Activated CD4-positive, alpha-beta T cell treated with anti-CD3 and anti-CD28 coated beads, Interleukin-2, amount 10 ng/mL, durations not matched to agents 7 days and 5 days (primary cell): ENCODE measurements at regions of chr6 and their contacts with region 1.

Region 1: GRCh38 chr6:159701411-159701999 is 8.5 kb upstream of the SOD2 start:
- DNase-seq: no peak
- H3K4me3 Mint-ChIP-seq: no peak overlapping the region
- H3K27ac Mint-ChIP-seq: no peak overlapping the region
- H3K4me1 Mint-ChIP-seq: peaks cover 9% of the 10 kb centered on the region
- H3K27me3 Mint-ChIP-seq: no peaks in the 10 kb centered on the region

Region 2: GRCh38 chr6:159687341-159687740 is 14.2 kb before region 1 on chr6:
- CTCF ChIA-PET with region 1: interaction called, 12 read pairs
- POLR2A ChIA-PET with region 1: no interaction called
- DNase-seq: no peak
- H3K4me3 Mint-ChIP-seq: no peak overlapping the region
- H3K27ac Mint-ChIP-seq: no peak overlapping the region
- H3K4me1 Mint-ChIP-seq: peaks cover 45% of the 10 kb centered on the region
- H3K27me3 Mint-ChIP-seq: no peaks in the 10 kb centered on the region